Prostate gland (tissue), 2 donors: ENCODE measurements at regions of chr3 and their contacts with region 1.

Region 1: DNA sequence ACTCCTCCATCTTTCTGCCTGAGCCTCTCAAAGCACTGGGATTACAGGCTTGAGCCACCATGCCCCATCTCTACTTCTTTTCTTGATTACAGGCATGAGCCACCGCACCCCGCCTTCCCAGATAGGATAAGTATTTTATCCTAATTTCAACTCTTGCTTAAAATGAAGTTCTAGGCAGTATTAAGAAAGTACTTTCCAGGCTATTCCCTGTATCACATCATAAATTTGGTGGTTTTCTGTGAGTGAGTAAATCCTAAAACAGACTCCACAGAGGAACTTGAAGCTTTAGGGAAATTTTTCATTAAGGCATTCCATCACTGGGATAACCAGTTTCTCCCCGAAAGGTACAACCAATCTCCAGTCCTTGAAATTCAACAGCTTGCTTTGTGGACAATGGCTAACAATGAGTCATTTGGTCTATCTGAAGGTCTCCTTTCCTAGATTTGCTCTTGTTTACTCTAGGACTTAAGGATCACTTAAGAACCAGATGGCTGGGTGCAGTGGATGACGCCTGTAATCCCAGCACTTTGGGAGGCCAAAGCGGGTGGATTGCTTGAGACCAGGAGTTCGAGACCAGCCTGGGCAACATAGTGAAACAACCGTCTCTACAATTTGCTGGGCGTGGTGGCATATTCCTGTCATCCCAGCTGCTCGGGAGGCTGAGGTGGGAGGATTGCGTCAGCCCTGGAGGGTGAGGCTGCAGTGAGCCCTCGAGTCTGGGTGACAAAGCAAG is 49.7 kb upstream of the SKIL start:
- DNase-seq: no peak
- H3K4me3 ChIP-seq: no peak overlapping the region
- H3K27ac ChIP-seq: no peak overlapping the region
- H3K4me1 ChIP-seq: no peaks in the 10 kb centered on the region
- H3K27me3 ChIP-seq: no peaks in the 10 kb centered on the region
- CTCF ChIP-seq: no peak
- POLR2A ChIP-seq: no peak

Region 2: DNA sequence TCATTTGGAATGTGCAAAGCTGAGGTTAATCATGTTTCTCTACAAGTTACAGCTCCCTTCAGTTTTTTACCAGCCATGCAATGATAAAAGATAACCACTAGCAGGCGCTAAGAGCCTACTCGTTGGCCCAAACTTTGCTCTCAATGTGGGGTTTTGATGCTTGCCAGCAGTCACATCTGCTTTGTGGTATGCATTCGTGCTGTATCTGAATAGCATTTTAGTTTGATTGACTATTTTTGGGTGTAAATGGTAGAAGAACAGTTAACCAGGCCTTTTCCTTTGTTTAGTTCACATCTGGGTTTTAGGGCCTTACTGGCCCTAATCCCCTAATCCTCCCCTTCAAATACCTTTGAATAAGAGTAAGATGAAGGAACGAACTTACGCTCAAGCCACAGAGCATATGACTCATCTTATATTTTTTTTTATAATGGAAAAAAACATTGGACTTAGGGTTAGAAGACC is 106.4 kb after region 1 on chr3:
- intact Hi-C with region 1: loop called (anchors 2 kb)
- DNase-seq: no peak
- H3K4me3 ChIP-seq: no peak overlapping the region
- H3K27ac ChIP-seq: no peak overlapping the region
- H3K4me1 ChIP-seq: peaks cover 4% of the 10 kb centered on the region
- H3K27me3 ChIP-seq: no peaks in the 10 kb centered on the region
- CTCF ChIP-seq: peak; percentile 67 to 90 (median 82)
- POLR2A ChIP-seq: no peak